SK-N-SH (cell line): ENCODE measurements at regions of chr4 and their contacts with region 1.

Region 1: DNA sequence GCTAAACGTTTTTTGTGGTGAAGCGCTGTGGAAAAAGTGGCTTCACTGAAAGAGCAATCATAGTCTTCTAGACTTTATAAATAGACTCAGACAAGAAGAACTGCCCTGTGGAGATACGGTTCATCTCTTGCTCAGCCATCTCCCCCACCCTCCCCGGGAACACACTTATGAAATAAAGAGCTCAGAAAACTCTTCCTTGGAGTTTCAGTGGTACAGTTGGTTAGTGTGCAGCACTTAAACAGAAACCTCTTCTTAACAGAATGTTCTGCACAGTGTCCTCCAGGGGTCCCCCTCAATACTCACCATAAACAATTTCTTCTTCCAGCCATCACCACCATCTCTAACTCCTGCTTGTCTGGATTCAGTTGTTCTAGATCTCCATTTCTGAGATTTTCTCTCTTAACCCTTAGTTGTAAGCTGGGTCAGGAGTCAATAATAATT is 313.0 kb downstream of the ARHGAP10 start:
- DNase-seq: peak; percentile 21
- H3K4me3 ChIP-seq: no peak overlapping the region
- H3K27ac ChIP-seq: no peak overlapping the region
- H3K4me1 ChIP-seq: peaks cover 0 to 2% of the 10 kb centered on the region in 2 experiments; a peak in 1 of 4 replicates
- H3K27me3 ChIP-seq: no peaks in the 10 kb centered on the region
- CTCF ChIP-seq: 0 out of 2 replicates have a peak, but pooled peaks have one; percentile 14
- EP300 ChIP-seq: no peak
- RAD21 ChIP-seq: peak; percentile 44

Region 2: GRCh38 chr4:148034552-148035219 is 10.2 kb before region 1 on chr4:
- CTCF ChIA-PET with region 1: interaction called, 13 read pairs
- POLR2A ChIA-PET with region 1: no interaction called
- DNase-seq: no peak
- H3K4me3 ChIP-seq: no peak overlapping the region
- H3K27ac ChIP-seq: no peak overlapping the region
- H3K4me1 ChIP-seq: no peaks in the 10 kb centered on the region
- H3K27me3 ChIP-seq: no peaks in the 10 kb centered on the region
- CTCF ChIP-seq: no peak
- EP300 ChIP-seq: no peak
- RAD21 ChIP-seq: no peak